ENCODE measurements at regions of chr4 and their contacts with region 1.

Region 1: DNA sequence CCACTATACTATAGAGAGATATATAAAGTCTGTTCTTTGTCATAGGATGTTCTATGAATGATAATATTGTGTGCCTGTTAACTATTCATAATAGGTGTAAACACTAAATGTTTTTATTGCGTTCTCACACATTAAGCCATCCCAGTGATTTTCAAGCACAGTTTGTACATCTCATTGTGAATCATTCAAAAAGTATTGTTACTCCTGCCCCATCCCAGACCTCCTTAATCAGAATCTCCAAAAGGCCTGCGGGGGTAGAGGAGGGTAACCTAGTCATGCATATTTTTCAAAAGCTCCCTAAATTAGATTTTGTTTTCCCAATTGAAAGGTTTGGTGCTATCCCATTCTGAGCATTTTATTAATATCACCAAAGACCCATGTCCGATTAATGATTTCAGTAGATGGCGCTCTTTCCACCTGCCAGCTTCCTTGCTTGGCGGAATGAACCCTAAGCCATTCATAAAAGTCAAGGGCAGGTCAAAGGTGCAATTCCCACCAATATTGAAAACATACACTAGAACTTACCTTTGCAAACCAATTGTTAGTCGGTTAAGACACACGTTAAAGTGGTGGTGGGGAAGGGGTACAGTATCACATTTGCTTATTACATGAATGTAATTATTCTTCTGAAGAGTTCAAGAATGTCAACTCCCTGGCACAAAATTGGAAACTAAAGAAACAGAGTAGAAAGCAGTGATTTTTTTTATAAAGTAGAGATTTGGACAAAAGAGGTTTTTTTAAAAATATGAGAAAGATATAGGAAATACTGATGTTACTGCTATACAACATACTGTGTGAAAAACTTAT is 5.8 kb upstream of the TET2 start:
- DNase-seq: no peak
- H3K4me3 ChIP-seq: no peak overlapping the region
- H3K27ac ChIP-seq: no peak overlapping the region
- H3K4me1 ChIP-seq: no peaks in the 10 kb centered on the region
- H3K27me3 ChIP-seq: no peaks in the 10 kb centered on the region
- CTCF ChIP-seq: peak in 3 of 4 experiments; percentile 32 to 56 (median 37)
- POLR2A ChIP-seq: no peak

Region 2: GRCh38 chr4:105471566-105472176 is 330.8 kb after region 1 on chr4:
- intact Hi-C with region 1: loop called (anchors 1 kb)
- DNase-seq: peak; percentile 79
- H3K4me3 ChIP-seq: peak overlapping the region; percentile 69 to 87
- H3K27ac ChIP-seq: peak overlapping the region; percentile 93 to 99
- H3K4me1 ChIP-seq: peaks cover 4% of the 10 kb centered on the region
- H3K27me3 ChIP-seq: no peaks in the 10 kb centered on the region
- CTCF ChIP-seq: peak; percentile 17 to 84 (median 80)
- POLR2A ChIP-seq: no peak

Measured in prostate gland (tissue), 2 donors.